WTC11 (cell line): ENCODE measurements at regions of chr17 and their contacts with region 1.

Region 1: GRCh38 chr17:65100316-65101140 is 36.6 kb upstream of the RGS9 start:
- DNase-seq: peak; percentile 83
- ATAC-seq: peak; percentile 96
- H3K4me3 Mint-ChIP-seq: peak overlapping the region; percentile 71
- H3K27ac Mint-ChIP-seq: no peak overlapping the region
- H3K4me1 Mint-ChIP-seq: peaks cover 14% of the 10 kb centered on the region
- H3K27me3 Mint-ChIP-seq: no peaks in the 10 kb centered on the region
- CTCF ChIP-seq: peak; percentile 97

Region 2: GRCh38 chr17:65017207-65017774 is 83.2 kb before region 1 on chr17:
- CTCF ChIA-PET with region 1: interaction called, 14 read pairs
- POLR2A ChIA-PET with region 1: no interaction called
- DNase-seq: no peak
- ATAC-seq: peak; percentile 62
- H3K4me3 Mint-ChIP-seq: no peak overlapping the region
- H3K27ac Mint-ChIP-seq: peak overlapping the region; percentile 74; the same call in 1 of the 2 replicates
- H3K4me1 Mint-ChIP-seq: peaks cover 20% of the 10 kb centered on the region
- H3K27me3 Mint-ChIP-seq: no peaks in the 10 kb centered on the region
- CTCF ChIP-seq: no peak

Region 3: DNA sequence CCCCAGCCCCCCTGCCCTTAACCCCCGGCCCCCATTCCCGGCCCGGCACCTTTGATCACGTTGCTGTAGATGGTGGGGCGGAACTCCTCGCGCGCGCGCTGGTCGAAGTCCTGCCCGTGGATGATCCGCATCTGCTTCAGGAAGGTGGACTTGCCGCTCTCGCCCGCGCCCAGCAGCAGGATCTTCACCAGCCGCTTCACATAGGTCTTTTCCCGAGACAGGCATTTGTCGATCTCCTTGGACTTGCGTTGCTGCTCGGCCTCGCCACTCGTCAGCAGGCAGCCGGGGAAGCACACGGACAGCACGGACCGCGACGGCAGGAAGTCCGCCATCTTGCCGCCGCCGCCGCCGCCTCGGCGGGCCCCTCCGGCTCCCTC is 44.3 kb before region 1 on chr17:
- CTCF ChIA-PET with region 1: interaction called, 22 read pairs
- POLR2A ChIA-PET with region 1: interaction called, 3 read pairs
- DNase-seq: no peak
- ATAC-seq: peak; percentile 4; the same call in 1 of the 2 replicates
- H3K4me3 Mint-ChIP-seq: peak overlapping the region; percentile 94
- H3K27ac Mint-ChIP-seq: peak overlapping the region; percentile 92
- H3K4me1 Mint-ChIP-seq: peaks cover 45% of the 10 kb centered on the region
- H3K27me3 Mint-ChIP-seq: no peaks in the 10 kb centered on the region
- CTCF ChIP-seq: no peak

Region 4: DNA sequence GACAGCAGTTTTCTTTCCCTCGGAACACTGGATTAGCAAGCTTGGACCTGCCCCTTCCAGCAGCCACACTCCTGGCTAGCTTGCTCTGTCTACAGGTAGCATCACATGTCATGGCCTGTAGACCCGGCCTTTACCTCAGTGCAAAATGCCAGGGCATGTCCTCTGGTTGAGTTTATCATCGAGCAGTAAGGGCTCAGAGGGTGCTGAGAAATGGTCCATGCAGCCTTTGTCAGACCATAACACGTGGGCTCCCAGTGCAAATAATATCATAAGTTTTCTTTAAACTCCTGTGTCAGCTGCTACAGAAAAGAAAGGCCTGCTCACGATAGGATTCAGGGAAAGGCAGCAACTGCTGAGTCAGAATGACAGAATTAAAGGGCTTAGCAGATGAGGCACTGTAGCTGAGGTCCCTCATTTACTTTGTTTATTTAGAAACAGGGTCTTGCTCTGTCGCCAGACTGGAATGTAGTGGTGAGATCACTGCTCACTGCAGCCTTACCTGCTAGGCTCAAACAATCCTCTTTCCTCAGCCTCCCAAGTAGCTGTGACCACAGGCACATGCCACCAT is 36.0 kb before region 1 on chr17:
- CTCF ChIA-PET with region 1: interaction called, 22 read pairs
- POLR2A ChIA-PET with region 1: no interaction called
- DNase-seq: no peak
- ATAC-seq: no peak; the same call in 1 of the 2 replicates
- H3K4me3 Mint-ChIP-seq: no peak overlapping the region
- H3K27ac Mint-ChIP-seq: peak overlapping the region; percentile 72; the same call in 1 of the 2 replicates
- H3K4me1 Mint-ChIP-seq: peaks cover 33% of the 10 kb centered on the region
- H3K27me3 Mint-ChIP-seq: no peaks in the 10 kb centered on the region
- CTCF ChIP-seq: no peak

Region 5: DNA sequence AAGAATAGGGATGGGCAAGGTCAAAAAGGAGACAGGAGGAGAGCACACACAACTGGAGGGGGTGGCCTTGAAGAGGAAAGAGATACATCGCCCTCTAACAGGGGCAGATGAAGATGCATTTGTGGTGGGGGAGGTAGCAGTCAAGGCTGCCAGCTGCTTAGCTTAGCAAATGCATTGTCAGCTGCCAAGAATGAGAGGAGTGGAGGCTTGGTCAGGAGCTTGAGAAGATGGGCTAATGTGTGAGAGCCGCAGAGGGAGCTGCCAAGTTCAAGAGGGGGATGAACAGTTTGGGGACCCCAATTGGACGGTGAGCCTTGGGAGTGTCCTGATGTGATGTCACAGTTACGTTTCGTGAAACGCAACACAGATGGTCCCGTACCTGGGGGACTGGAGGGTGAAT is 15.1 kb before region 1 on chr17:
- CTCF ChIA-PET with region 1: interaction called, 13 read pairs
- POLR2A ChIA-PET with region 1: no interaction called
- DNase-seq: no peak
- ATAC-seq: peak; percentile 52
- H3K4me3 Mint-ChIP-seq: no peak overlapping the region
- H3K27ac Mint-ChIP-seq: no peak overlapping the region
- H3K4me1 Mint-ChIP-seq: peaks cover 8% of the 10 kb centered on the region
- H3K27me3 Mint-ChIP-seq: no peaks in the 10 kb centered on the region; the same call in 1 of the 2 replicates
- CTCF ChIP-seq: no peak

Region 6: DNA sequence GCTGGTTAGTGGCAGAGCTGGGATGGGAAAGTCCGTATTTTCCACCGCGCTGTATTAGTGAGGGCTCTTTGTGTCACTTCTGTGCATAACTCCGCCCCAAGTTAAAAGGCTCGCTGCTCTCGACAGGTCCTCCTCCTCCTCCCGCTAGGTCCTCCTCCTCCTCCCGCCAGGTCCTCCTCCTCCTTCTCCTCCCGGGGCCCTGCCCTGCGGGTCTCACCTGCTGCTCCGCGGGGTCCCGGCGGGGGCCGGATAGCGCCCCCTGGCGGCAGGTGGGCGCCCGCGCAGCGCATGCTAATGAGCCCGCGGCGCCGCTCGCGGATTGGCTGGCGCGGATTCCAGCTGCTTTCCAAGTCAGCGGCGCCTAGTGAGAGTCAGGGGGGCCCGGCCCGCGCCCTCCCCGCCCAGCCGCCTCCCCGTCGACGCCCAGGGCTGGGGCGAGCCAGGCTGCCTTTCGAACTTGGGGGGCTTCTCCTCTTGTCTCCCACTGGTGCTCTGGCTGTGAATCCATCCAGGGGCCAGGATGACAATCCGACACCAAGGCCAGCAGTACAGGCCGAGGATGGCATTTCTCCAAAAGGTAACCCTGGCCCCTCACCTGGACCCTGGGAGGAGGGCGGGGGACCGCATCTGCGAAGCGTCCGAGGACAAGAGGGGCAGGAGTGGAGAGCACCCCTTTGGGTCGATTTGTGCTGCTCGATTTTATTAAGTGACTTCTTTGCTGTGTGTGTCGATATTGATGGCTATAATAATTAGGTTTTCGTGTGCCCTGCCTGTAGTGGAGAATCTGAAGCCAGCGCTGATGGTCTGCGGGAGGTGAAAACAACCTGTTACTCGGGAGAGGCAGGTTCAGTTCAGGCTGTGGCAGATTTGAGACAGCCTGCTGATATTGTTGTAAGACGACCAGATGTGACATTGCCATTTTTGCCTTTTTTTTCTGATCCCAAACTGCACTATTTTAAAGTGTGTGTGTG is 36.8 kb after region 1 on chr17 and contains the start of gene RGS9:
- CTCF ChIA-PET with region 1: interaction called, 15 read pairs
- POLR2A ChIA-PET with region 1: no interaction called
- DNase-seq: peak; percentile 89
- ATAC-seq: peak; percentile 89
- H3K4me3 Mint-ChIP-seq: peak within 1 kb of the TSS; percentile 71
- H3K27ac Mint-ChIP-seq: no peak within 1 kb of the TSS
- H3K4me1 Mint-ChIP-seq: peaks cover 24% of the 10 kb centered on the region
- H3K27me3 Mint-ChIP-seq: peaks cover 21% of the 10 kb centered on the region
- CTCF ChIP-seq: peak; percentile 99
- total RNA-seq, gene RGS9: 11.3 to 17.8 TPM (median 13.3 TPM) in 3 replicates

Region 7: GRCh38 chr17:65154770-65155621 is 54.5 kb after region 1 on chr17:
- CTCF ChIA-PET with region 1: no interaction called
- POLR2A ChIA-PET with region 1: no interaction called
- DNase-seq: no peak
- ATAC-seq: no peak
- H3K4me3 Mint-ChIP-seq: no peak overlapping the region
- H3K27ac Mint-ChIP-seq: no peak overlapping the region
- H3K4me1 Mint-ChIP-seq: peaks cover 14% of the 10 kb centered on the region
- H3K27me3 Mint-ChIP-seq: no peaks in the 10 kb centered on the region
- CTCF ChIP-seq: no peak